Right ventricle myocardium superior (tissue), 1 donor: ENCODE measurements at regions of chr15 and their contacts with region 1.

Region 1: GRCh38 chr15:64836023-64836536 is 5.6 kb upstream of the PLEKHO2 start:
- DNase-seq: no peak
- ATAC-seq: peak; percentile 4

Region 2: GRCh38 chr15:64596701-64597476 is 239.2 kb before region 1 on chr15:
- intact Hi-C with region 1: no loop called
- DNase-seq: no peak
- ATAC-seq: peak; percentile 70

Region 3: DNA sequence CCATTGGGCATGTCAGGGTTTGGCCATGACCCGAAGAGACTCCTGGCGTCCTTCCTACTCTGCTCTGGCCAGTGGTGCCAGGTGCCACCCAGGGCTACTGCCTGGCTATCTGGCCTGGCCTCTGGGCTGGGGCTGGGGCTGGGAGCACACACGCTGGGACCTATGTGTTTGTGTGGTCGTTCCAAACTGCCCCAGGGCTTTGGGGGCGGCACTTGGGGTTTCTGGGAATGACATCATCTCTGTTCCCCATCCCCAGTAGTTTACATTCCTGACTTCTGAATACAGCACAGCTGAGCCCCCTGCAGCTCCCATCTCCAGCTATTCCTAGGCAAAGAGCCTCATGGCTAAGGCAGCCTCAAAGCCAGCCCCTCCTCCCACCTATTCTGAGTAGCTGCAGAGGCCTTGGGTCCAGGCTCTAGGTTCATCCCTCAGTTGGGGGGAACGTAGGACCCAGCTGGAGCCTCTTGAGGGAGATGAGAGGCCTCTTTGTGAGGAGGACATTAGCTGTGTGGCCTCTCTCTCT is 30.0 kb after region 1 on chr15:
- intact Hi-C with region 1: no loop called
- DNase-seq: peak; percentile 30
- ATAC-seq: no peak

Region 4: DNA sequence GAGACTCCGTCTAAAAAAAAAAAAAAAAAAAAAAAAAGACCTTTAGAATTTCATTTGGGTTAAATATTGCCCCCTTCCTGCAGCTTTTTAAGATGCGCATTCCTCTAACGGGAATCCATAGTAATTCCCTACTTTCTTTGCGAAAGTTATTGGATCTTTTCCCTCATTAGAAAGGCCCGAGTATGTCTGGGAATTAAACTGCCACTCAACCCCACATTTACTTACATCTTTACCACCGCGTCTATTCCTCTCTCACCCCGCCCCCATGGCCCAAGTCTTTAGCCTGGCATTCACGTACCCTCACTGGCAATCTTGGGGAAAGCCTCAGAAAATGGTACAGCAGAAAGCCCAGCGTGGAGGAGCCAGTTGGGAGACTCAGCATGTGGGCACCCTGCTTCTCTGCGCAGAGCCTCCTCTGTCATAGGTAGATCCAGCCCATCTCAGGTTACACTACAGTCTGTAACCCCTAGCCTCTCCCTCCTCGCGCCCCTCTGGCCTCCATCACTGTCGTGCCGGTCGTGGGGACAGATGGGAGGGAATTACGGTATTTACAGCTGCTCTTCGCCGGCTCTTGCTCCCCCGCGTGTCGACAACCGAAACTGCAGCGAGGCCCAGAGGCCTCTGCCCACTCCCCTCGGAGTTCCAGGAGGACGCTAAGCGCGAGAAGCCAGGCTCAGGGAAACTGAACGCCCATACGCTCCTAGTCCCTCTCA is 69.2 kb after region 1 on chr15:
- intact Hi-C with region 1: loop called (anchors 5 kb)
- DNase-seq: peak; percentile 92
- ATAC-seq: peak; percentile 96

Region 5: GRCh38 chr15:64930778-64931371 is 94.8 kb after region 1 on chr15:
- intact Hi-C with region 1: no loop called
- DNase-seq: no peak
- ATAC-seq: no peak